Heart right ventricle (tissue), 16 donors: ENCODE measurements at regions of chr4 and their contacts with region 1.

Region 1: DNA sequence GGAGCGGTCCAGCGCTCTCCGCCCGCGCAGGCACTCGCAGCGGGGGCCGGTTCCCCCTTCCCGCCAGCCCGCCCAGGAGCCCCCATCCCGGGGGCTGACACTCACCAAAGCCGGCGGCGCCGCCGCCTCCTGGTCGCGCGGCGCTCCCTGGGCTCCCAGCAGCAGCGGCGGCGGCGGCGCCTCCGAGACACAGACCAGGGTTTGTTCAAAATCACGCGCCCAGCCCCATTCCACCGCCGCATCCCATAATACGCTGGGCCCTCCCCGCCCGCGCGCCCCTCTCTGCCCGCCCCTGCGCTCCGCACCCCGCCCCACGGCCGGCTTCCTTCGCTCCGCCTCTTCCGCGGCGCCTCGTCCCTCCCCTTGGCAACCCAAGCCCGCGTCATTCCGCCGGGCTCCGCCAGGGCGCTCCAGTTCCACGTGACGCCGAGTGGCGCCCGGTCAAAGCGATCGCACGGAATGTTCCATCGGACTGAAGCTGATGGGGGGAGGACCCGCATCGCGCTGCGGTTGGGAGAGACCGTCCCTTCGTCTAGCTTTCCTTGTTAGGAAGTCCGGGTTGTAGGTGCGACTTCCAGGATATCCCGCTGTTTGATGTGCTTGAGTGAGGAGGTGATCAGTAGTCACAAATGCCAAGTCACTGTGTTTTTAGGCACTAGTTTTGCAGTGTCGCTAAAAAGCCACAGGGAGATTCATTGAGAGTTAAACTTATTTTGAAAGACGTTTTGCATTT is 2.2 kb upstream of the LIN54 start:
- DNase-seq: peak; percentile 96 to 98
- ATAC-seq: peak; percentile 98 to 100 (median 98)
- H3K4me3 ChIP-seq: peak overlapping the region; percentile 66 to 98 (median 79)
- H3K27ac ChIP-seq: peak overlapping the region; percentile 57 to 97 (median 78)
- H3K4me1 ChIP-seq: peaks cover 6 to 45% (median 34%) of the 10 kb centered on the region in 9 donors
- H3K27me3 ChIP-seq: no peaks in the 10 kb centered on the region
- CTCF ChIP-seq: peak; percentile 21 to 66 (median 55)

Region 2: DNA sequence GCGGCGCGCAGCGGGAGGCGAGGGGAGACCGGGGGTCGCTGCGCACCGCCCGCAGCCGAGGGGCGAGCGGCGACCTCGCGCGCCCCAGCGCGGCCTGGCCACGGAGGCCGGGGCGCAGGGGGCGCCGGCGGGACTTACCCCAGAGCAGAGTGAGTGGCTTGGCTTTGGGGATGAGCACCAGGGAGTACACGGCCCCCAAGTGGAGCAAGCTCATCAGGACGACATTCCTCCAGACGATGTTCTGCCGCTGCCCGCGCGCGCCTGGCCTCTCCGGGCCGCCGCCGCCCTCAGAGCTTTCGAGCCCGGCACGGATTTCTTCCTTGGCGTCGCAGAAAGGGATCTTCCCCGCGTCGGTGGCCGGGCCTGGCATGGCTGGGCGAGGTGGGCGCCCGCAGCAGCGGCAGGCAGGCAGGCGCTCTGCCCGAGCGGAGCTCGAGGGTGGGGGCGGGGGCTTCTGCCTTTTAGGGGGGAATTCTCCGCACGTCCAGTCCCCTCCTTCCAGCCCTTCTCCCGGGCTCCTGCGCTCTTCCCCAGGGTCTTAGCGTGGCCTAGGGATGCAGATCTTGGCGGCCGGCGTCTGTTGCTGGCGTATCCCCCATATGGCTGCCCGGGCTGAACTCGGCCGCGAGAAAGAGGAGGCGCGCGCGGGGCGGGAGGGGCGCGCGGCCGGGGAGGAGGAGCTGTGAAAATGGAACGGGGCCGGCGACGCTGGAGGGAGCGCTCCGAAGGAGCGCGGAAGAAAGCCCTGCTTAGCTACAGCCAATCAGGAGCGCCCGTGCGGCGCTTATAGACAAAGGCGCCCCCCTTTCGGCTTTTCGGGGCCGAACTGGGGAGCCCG is 214.5 kb before region 1 on chr4 and contains the start of gene SCD5:
- intact Hi-C with region 1: no loop called
- DNase-seq: peak; percentile 67 to 75
- ATAC-seq: peak; percentile 87 to 95 (median 92)
- H3K4me3 ChIP-seq: peak within 1 kb of the TSS; percentile 47 to 86 (median 68)
- H3K27ac ChIP-seq: peak within 1 kb of the TSS in 6 of 10 donors; percentile 31 to 64 (median 52)
- H3K4me1 ChIP-seq: peaks cover 0 to 29% (median 20%) of the 10 kb centered on the region in 9 donors
- H3K27me3 ChIP-seq: peaks cover 0 to 50% (median 6%) of the 10 kb centered on the region in 7 donors
- CTCF ChIP-seq: peak in 1 of 9 donors; percentile 10
- total RNA-seq, gene SCD5: 1.7 to 5.0 (median 3.0) TPM

Region 3: DNA sequence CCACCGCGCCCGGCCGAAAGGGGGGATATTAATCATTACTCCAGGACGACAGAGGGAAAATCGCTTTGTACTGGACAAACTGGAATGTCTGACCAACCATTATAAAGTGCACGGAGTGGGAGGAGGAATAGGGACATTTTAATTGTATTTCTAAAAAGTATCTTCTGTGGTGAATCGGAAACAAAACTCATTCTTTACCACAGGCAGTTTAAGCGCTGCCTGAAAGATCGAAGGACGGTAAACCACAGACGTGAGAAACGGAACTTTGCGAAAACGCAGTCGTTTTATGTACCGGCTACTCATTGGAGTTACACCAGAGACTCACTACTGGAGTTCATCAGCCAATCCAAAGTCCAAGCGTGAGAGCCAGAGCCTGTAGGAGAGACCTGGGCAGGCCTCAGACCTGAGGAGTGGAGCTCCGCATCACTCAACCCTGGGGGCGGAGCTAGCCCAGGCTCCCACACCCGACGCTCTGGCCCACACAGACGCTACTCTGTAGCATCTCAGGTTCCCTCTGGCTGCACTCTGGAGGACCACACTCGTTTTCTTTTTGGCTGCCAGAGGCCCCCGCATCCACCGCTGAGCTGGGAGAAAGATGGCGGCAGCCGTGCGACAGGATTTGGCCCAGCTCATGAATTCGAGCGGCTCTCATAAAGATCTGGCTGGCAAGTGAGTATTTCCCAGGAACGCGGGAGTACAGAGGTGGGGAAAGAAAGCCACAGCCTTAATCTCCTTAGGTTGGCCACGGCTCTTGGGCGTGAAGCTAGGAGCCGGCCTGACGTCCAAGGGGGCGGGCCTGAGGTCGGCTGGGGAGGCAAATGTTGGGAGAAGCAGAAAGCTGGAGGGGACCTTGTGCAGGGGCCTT is 22.0 kb after region 1 on chr4 and contains the start of gene COPS4:
- intact Hi-C with region 1: loop called in 7 of 10 experiments (anchors 1 to 2 kb)
- DNase-seq: peak; percentile 92 to 98
- ATAC-seq: peak; percentile 100
- H3K4me3 ChIP-seq: peak within 1 kb of the TSS; percentile 41 to 92 (median 67)
- H3K27ac ChIP-seq: peak within 1 kb of the TSS; percentile 62 to 95 (median 88)
- H3K4me1 ChIP-seq: peaks cover 0 to 27% (median 22%) of the 10 kb centered on the region in 9 donors
- H3K27me3 ChIP-seq: no peaks in the 10 kb centered on the region
- CTCF ChIP-seq: peak; percentile 36 to 74 (median 52)
- total RNA-seq, gene COPS4: 48.1 to 65.1 (median 57.5) TPM

Region 4: GRCh38 chr4:83074086-83074704 is 61.3 kb after region 1 on chr4:
- intact Hi-C with region 1: no loop called
- DNase-seq: peak in 1 of 2 donors; percentile 25
- ATAC-seq: peak in 3 of 8 donors; percentile 50 to 59 (median 56)
- H3K4me3 ChIP-seq: no peak overlapping the region
- H3K27ac ChIP-seq: no peak overlapping the region
- H3K4me1 ChIP-seq: peaks cover 0 to 16% (median 0%) of the 10 kb centered on the region in 9 donors
- H3K27me3 ChIP-seq: no peaks in the 10 kb centered on the region
- CTCF ChIP-seq: peak; percentile 31 to 76 (median 70)